Activated naive CD4-positive, alpha-beta T cell treated with anti-CD3 and anti-CD28 coated beads for 36 hours (primary cell): ENCODE measurements at regions of chr9 and their contacts with region 1.

Region 1: GRCh38 chr9:76393963-76394679 is at the start of gene RFK:
- DNase-seq: peak; percentile 94
- H3K4me3 Mint-ChIP-seq: peak within 1 kb of the TSS; percentile 96
- H3K27ac Mint-ChIP-seq: peak within 1 kb of the TSS; percentile 92
- H3K4me1 Mint-ChIP-seq: peaks cover 25% of the 10 kb centered on the region
- H3K27me3 Mint-ChIP-seq: no peaks in the 10 kb centered on the region
- total RNA-seq, gene RFK: 4.2 to 5.2 TPM

Region 2: DNA sequence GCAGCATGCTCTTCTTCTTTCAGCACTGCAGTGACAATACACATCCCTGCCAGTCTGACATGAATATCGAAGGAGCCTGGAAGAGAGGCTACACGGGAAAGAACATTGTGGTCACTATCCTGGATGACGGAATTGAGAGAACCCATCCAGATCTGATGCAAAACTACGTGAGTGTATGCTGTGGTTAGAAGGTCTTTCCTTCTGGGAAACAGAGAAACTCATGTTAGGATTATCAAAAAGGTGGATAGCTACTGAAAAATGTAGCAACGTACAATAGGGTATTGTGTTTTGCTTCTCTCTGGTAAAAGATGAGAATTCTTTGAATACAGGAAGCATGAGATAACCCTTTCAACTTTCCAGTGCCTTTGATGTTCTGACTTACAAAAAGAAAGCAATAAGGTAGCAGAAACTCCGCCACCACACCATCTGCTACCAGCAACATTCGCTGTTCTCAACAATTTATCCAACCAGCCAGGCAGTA is 370.4 kb before region 1 on chr9:
- CTCF ChIA-PET with region 1: no interaction called
- intact Hi-C with region 1: loop called (anchors 5 kb)
- DNase-seq: peak; percentile 64
- H3K4me3 Mint-ChIP-seq: peak overlapping the region; percentile 68
- H3K27ac Mint-ChIP-seq: peak overlapping the region; percentile 83
- H3K4me1 Mint-ChIP-seq: peaks cover 92% of the 10 kb centered on the region
- H3K27me3 Mint-ChIP-seq: no peaks in the 10 kb centered on the region

Region 3: GRCh38 chr9:76441551-76442322 is 47.6 kb after region 1 on chr9:
- CTCF ChIA-PET with region 1: interaction called, 4 read pairs
- intact Hi-C with region 1: loop called (anchors 2 kb)
- DNase-seq: peak; percentile 49
- H3K4me3 Mint-ChIP-seq: peak overlapping the region; percentile 28
- H3K27ac Mint-ChIP-seq: peak overlapping the region; percentile 77
- H3K4me1 Mint-ChIP-seq: peaks cover 24% of the 10 kb centered on the region
- H3K27me3 Mint-ChIP-seq: peaks cover 8% of the 10 kb centered on the region

Region 4: GRCh38 chr9:76658535-76659231 is 264.6 kb after region 1 on chr9:
- CTCF ChIA-PET with region 1: interaction called, 3 read pairs
- intact Hi-C with region 1: loop called (anchors 2 kb)
- DNase-seq: no peak
- H3K4me3 Mint-ChIP-seq: no peak overlapping the region
- H3K27ac Mint-ChIP-seq: no peak overlapping the region
- H3K4me1 Mint-ChIP-seq: peaks cover 5% of the 10 kb centered on the region
- H3K27me3 Mint-ChIP-seq: peaks cover 3% of the 10 kb centered on the region

Region 5: GRCh38 chr9:77011973-77012821 is 618.1 kb after region 1 on chr9:
- CTCF ChIA-PET with region 1: no interaction called
- intact Hi-C with region 1: loop called (anchors 1 kb)
- DNase-seq: peak; percentile 84
- H3K4me3 Mint-ChIP-seq: peak overlapping the region; percentile 36
- H3K27ac Mint-ChIP-seq: no peak overlapping the region
- H3K4me1 Mint-ChIP-seq: peaks cover 16% of the 10 kb centered on the region
- H3K27me3 Mint-ChIP-seq: peaks cover 69% of the 10 kb centered on the region

Region 6: GRCh38 chr9:77177161-77177893 is 783.2 kb after region 1 on chr9 and contains the start of gene VPS13A:
- CTCF ChIA-PET with region 1: no interaction called
- intact Hi-C with region 1: loop called (anchors 1 kb)
- DNase-seq: peak; percentile 96
- H3K4me3 Mint-ChIP-seq: peak within 1 kb of the TSS; percentile 80
- H3K27ac Mint-ChIP-seq: peak within 1 kb of the TSS; percentile 79
- H3K4me1 Mint-ChIP-seq: peaks cover 23% of the 10 kb centered on the region
- H3K27me3 Mint-ChIP-seq: no peaks in the 10 kb centered on the region
- total RNA-seq, gene VPS13A: 26.8 to 26.9 TPM